Prostate gland (tissue), 2 donors: ENCODE measurements at regions of chr3 and their contacts with region 1.

Region 1: GRCh38 chr3:50321336-50322114 is 1.0 kb downstream of the HYAL2 start:
- DNase-seq: peak; percentile 84
- H3K4me3 ChIP-seq: peak overlapping the region; percentile 48 to 68
- H3K27ac ChIP-seq: peak overlapping the region; percentile 88 to 95
- H3K4me1 ChIP-seq: peaks cover 27% of the 10 kb centered on the region
- H3K27me3 ChIP-seq: no peaks in the 10 kb centered on the region
- CTCF ChIP-seq: peak in 2 of 4 experiments; percentile 21 to 66
- POLR2A ChIP-seq: no peak

Region 2: DNA sequence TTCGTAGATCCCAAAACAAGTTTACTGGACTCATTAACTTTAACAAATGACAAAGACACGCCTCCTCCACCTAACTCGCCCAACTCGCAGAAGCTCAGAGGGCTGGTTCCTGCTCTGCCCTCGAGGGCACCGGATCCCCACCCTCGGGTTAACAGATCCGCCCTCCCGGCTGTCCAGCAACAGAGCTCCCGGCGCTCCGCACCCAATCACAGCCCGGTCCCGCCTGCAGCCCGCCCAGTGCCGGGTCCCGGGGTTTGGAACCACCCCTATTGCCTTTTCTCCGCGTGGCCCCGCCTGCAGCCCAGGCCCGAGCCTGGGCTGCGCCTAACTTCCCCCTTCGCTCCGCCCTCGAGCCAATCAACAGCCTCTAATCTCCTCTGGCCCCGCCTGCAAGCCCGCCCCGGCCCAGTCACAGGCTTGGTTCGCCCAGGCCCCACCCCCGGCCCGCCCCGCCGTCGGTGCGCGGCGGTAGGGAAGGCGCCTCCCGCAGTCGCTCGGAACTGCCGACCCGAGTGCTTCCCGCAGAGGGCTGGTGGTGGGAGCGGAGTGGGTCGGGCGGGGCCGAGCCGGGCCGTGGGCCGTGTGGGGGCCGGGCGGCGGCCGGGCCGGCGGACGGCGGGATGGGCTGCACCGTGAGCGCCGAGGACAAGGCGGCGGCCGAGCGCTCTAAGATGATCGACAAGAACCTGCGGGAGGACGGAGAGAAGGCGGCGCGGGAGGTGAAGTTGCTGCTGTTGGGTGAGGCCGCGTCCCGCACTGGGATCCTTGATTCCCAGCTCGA is 85.6 kb before region 1 on chr3 and contains the start of gene GNAI2:
- intact Hi-C with region 1: loop called (anchors 5 kb)
- DNase-seq: peak; percentile 99
- H3K4me3 ChIP-seq: peak within 1 kb of the TSS; percentile 69 to 97
- H3K27ac ChIP-seq: peak within 1 kb of the TSS; percentile 84 to 89
- H3K4me1 ChIP-seq: peaks cover 25% of the 10 kb centered on the region
- H3K27me3 ChIP-seq: no peaks in the 10 kb centered on the region
- CTCF ChIP-seq: peak in 2 of 4 experiments; percentile 11 to 27
- POLR2A ChIP-seq: peak; percentile 91
- total RNA-seq, gene GNAI2: 118 to 301 TPM

Region 3: GRCh38 chr3:50260027-50260941 is 61.2 kb before region 1 on chr3:
- intact Hi-C with region 1: loop called (anchors 2 kb)
- DNase-seq: peak; percentile 89
- H3K4me3 ChIP-seq: peak overlapping the region; percentile 54 to 62
- H3K27ac ChIP-seq: peak overlapping the region; percentile 96 to 98
- H3K4me1 ChIP-seq: peaks cover 16% of the 10 kb centered on the region
- H3K27me3 ChIP-seq: no peaks in the 10 kb centered on the region
- CTCF ChIP-seq: peak; percentile 99 to 100 (median 100)
- POLR2A ChIP-seq: peak; percentile 69